HEK293 (cell line): ENCODE measurements at regions of chr11 and their contacts with region 1.

Region 1: DNA sequence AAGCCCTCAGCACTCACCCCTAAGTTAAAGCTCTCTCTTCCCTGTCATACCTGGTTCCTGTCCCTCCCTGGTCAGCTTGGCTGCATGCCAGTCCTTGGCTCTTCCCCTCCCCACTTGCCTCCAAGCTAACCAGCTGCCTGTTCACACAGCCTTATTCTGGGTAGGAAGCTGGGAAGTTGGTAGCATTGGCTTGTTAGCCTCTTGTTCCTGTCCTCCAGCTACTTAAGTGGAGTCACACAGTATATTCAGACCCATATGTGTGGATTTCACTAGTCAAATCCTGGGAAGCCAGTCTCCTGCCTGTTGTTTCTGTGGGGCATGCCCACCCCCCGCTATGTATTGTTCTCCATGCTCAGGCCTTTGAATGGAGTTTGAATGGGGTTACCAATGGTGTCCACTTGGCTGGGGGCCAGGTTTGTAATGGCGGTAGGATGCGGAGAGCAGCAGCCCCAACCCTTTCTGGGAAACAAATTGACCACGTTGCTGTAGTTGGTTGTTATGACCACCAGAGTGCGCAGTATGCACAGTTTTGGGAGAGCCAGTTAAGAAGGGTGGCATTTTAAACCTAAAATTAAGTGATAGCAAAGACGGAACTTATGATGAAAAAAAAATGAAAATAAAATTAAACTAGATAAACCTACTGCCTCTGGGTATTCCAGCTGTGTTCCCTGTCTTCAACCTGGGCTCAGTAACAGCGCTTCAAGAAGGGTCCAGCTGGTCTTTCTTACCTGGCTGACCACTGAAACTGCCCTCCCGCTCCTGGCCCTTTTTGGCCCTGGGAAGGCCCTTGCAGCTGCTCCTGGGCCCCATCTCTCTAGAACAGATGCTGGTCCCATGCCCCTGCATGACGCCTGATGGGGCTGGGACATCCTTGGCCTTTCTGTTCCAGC is 10.7 kb upstream of the RPS3 start:
- H3K4me3 ChIP-seq: no peak overlapping the region
- H3K27ac ChIP-seq: no peak overlapping the region
- H3K4me1 ChIP-seq: no peaks in the 10 kb centered on the region
- CTCF ChIP-seq: peak; percentile 58

Region 2: DNA sequence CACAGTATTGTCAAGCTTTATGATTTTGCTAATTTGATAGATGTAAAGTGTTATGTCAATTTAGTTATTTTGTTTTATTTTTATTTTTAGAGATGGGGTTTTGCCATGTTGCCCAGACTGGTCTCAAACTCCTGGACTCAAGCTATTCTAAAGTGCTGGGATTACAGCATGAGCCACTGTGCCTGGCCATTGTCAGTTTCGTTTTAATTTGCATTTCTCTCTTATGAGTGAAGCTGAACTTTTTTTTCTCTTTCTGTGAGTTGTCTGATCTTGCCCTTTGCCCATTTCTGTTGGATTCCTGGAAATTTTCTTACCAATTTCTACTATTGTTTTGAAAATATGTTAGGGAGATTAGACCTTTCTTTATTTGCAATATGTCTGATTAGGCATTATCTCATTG is 384.4 kb before region 1 on chr11:
- CTCF ChIA-PET with region 1: no interaction called
- POLR2A ChIA-PET with region 1: no interaction called
- H3K4me3 ChIP-seq: no peak overlapping the region
- H3K27ac ChIP-seq: no peak overlapping the region
- H3K4me1 ChIP-seq: no peaks in the 10 kb centered on the region
- CTCF ChIP-seq: no peak

Region 3: GRCh38 chr11:75280227-75280701 is 108.4 kb before region 1 on chr11:
- CTCF ChIA-PET with region 1: interaction called, 209 read pairs
- POLR2A ChIA-PET with region 1: interaction called, 3 read pairs
- H3K4me3 ChIP-seq: no peak overlapping the region
- H3K27ac ChIP-seq: no peak overlapping the region
- H3K4me1 ChIP-seq: no peaks in the 10 kb centered on the region
- CTCF ChIP-seq: peak; percentile 80

Region 4: DNA sequence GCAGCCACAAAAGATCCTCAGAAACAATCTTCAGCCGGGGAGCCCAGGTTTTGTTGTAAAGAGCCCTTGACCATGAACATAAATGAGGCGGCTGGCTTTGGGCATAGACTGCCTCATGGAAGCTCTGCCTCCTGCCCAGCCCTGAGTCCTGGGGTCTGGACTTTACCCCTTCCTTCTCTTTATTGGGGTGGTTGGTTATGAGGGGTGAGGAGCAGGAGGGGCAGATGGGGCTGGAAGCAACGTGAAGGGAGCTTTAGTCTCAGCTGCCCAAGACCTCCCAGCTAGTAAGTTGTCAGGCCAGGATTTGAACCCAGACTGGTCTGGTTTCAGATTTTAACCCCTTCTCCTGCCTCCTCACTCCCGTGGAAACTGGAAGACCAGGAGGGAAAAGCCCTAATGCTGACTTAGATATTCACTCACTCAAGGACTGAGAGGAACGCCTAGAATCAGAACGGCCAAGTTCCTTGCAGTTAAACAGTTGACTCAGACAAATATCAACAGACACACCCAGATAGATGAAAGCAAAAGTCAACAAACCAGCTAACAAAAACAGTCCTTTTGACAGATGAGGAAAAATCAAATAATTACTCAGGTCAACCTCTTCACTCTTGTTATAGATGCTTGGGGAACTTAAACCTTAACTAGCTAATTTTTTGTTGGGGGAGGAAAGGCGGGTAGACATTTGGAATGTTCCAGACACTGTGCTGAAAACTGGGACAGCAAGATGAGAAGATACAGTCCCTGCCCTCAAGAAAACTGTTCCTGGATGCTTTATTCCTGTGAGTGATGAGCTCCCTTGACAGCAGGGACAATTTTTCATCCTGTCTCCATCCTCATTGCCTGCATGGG is 16.5 kb before region 1 on chr11:
- CTCF ChIA-PET with region 1: interaction called, 15 read pairs
- POLR2A ChIA-PET with region 1: no interaction called
- H3K4me3 ChIP-seq: no peak overlapping the region
- H3K27ac ChIP-seq: no peak overlapping the region; the same call in 1 of the 2 replicates
- H3K4me1 ChIP-seq: peaks cover 7% of the 10 kb centered on the region
- CTCF ChIP-seq: no peak

Region 5: DNA sequence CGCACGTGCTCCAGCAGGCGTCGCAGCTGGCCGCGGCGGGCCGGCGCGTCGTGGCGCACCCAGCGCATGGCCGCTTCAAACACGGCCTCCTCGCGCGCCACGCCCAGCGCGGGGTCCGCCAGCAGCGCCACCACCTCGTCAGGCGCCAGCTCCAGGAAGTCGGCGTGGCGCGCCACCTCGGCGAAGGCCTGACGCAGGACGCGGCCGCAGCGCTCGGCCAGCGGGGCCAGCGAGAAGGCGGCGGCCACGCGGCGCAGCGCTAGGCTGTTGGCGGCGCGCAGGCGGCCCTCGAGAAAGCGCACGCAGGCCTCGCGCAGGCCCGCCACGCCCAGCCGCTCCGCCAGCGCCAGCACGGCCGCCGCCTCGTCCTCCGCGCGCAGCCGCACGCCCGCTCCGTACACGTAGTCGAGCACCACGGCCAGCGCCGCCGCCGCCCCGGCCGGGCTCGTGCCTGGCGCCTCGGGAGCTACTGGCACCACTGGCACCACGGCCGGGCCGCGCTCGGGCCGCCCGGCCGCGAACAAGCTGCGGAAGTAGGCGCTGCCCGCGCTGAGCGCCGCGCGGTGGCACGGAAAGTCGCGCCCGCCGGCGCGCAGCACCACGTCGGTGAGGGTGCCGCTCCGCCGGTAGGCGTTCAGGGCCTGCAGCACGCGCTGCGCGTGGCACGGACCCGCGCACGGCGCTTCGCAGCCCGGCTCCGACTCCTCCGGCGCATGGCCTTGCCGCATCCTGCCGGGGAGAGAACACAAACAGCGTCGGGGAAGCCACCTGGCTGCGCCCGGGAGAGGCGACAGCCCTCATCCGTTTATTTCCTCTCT is 41.5 kb after region 1 on chr11:
- CTCF ChIA-PET with region 1: interaction called, 10 read pairs
- POLR2A ChIA-PET with region 1: no interaction called
- H3K4me3 ChIP-seq: no peak overlapping the region
- H3K27ac ChIP-seq: no peak overlapping the region
- H3K4me1 ChIP-seq: no peaks in the 10 kb centered on the region
- CTCF ChIP-seq: no peak

Region 6: DNA sequence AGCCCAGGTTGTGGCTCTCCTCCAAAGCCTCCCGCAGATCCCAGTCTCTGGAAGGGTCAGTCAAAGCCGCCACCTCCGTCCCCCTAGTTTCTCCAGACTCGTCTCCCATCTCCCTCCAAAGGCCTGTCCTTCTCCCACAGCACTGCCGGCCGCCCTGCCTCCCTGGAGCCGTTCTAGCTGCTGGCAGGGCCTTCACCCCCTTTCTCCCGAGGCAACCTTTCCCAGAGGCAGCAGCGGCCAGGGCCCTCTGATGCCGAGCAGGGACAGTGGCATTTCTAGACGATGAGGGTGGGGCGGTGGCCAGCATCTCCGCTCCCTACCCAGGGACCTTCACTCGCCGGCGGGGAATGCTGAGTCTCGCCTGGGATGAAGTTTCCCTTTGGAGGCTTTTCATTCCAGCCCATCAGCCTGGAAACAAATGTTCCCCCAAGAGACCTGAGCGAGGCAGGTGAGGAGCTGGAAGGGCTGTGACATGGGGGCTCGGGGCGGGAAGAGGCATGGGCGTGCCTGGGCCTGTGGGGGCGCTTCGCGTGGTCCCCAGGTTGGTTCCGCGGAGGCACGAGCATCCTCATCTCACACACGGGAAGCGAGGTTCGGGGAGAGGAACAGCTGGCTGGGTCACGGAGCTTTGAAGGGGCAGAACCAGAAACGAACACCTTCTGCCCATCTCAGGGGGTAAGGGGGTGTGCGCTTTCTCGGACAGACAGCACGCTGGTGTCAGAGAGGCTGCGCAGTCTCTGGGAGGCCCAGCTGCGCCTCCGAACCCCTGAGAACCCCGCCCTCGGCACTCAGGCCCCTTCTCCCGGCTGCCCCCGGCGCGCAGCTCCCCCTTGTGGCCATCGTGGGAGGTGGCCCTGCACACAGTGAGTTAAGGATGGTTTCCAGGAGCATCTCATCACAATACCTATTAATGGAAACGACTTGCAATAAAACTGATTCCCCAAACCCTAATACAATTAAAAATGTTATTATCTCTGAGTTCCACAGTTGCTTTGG is 62.5 kb after region 1 on chr11:
- CTCF ChIA-PET with region 1: interaction called, 27 read pairs
- POLR2A ChIA-PET with region 1: no interaction called
- H3K4me3 ChIP-seq: no peak overlapping the region
- H3K27ac ChIP-seq: no peak overlapping the region
- H3K4me1 ChIP-seq: no peaks in the 10 kb centered on the region
- CTCF ChIP-seq: peak; percentile 48